Dorsolateral prefrontal cortex (tissue), 120 donors: ENCODE measurements at regions of chr7 and their contacts with region 1.

Region 1: DNA sequence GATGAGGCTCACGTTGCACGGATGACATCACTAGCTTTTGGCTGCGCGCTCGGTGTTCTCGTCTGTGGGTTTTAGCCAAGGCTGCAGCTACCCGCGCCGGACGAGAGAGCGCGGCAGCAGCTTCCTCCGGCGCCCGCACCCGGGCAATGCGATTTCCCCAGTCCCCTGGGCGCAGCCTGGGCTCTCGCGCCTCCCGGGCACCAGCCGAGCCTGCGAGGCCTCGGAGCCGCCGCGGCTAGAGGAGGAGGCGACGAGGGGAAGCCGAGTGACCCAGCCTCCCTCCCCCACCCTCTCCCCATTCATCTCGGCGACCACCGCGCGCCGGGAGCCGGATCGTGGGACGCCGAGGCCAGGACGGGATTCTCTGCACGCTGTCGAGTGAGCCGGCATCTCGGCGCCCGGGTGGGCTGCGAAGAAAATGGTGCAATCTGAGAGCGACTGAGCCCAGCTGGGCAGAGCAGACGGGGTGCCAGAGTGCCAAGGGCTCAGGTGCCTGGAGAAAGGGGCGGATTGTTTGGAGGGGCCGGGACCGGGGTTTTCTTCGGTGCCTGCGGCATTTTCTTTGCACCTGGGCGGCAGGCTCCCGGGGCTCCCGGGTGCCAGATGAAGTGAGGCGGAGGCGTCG is 1.2 kb upstream of the TMEM178B start:
- DNase-seq: peak; percentile 58 to 93 (median 84)
- H3K4me3 ChIP-seq: peak overlapping the region; percentile 57 to 89 (median 77)
- H3K27ac ChIP-seq: peak overlapping the region in 58 of 59 donors; percentile 39 to 94 (median 86)
- H3K27me3 ChIP-seq: peaks cover 0 to 4% (median 0%) of the 10 kb centered on the region in 45 donors
- CTCF ChIP-seq: peak in 15 of 56 donors; percentile 9 to 33 (median 21)

Region 2: GRCh38 chr7:140810830-140811556 is 261.7 kb before region 1 on chr7:
- intact Hi-C with region 1: loop called in 1 of 2 experiments (anchors 5 kb)
- DNase-seq: peak in 4 of 10 donors; percentile 47 to 69 (median 58)
- H3K4me3 ChIP-seq: no peak overlapping the region
- H3K27ac ChIP-seq: no peak overlapping the region
- H3K27me3 ChIP-seq: no peaks in the 10 kb centered on the region
- CTCF ChIP-seq: peak; percentile 54 to 87 (median 80)

Region 3: GRCh38 chr7:140841166-140841715 is 231.4 kb before region 1 on chr7:
- intact Hi-C with region 1: no loop called
- DNase-seq: no peak
- H3K4me3 ChIP-seq: no peak overlapping the region
- H3K27ac ChIP-seq: no peak overlapping the region
- H3K27me3 ChIP-seq: no peaks in the 10 kb centered on the region
- CTCF ChIP-seq: no peak

Region 4: DNA sequence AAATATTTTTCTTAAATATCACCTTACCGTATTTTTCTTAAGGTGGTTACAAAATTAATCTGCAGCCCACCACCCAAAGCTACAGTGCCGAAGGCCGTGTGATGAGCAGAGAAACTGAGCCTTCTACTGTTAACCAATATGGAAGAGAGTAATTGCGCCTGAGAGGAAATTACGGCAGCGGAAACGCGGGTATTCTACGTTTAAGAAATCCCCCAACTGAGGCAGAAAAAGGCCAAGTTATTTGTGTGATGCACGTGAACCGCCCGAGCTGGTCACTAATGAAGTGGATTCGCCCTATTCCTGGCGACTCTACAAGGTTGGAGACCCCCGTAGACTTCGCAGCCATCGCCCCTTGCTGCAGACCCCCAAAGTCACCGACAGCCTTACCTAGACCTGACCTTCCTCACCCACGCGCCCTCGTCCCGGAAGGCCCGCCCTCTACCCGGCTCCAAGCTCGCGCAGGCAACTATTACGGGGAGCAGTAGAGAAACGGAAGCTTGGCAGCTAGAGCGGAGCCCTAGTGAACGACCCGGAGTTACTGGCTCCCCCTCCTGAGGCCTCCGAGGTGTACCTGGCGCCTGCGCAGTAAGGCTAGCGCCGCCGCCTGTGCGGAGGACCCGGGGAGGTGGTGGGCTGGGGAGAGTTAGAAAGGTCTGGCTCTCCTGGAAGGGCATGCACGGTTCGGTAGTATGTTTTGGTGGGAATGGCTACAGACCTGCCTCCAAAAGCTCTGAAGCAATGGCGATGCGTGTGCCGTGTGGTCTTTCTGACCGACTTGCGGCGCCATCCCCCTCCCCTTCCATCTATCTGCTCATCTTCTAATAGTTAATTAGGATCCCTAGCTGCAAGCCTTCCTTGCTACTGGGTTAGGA is 57.9 kb before region 1 on chr7 and contains the start of gene MRPS33:
- intact Hi-C with region 1: loop called in 1 of 2 experiments (anchors 5 kb)
- DNase-seq: peak; percentile 88 to 98 (median 97)
- H3K4me3 ChIP-seq: peak within 1 kb of the TSS; percentile 55 to 95 (median 78)
- H3K27ac ChIP-seq: peak within 1 kb of the TSS; percentile 57 to 97 (median 91)
- H3K27me3 ChIP-seq: no peaks in the 10 kb centered on the region
- CTCF ChIP-seq: peak; percentile 62 to 90 (median 80)
- total RNA-seq, gene MRPS33: 18.7 to 61.6 (median 43.0) TPM

Region 5: DNA sequence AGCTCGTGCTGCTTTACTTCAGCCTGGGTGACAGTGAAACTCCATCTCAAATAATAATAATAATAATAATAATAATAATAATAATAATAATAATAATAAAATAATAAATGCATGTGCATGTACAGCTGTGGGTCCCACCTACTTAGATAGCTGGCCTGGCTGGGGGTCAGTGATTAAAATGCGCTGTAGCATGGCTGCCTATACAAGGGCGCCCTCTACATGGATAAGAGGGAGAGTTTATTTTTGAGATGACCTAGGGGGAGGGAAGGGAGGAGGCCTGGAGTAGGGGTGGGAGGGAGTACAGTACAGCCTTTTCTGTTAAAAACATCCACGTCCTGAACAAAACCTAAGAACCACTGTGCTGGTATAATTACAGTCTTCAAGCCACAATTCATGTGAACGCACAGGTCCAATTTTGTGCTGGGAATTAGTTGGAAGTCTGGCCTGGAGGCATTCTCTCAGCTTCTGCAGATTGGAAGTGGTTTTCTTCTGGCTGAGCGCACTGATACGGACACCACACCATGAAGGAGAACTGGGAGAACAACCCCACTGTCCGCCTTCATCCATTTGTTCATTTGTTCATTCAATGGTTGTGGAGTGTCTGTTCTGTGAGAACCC is 147.7 kb after region 1 on chr7:
- intact Hi-C with region 1: loop called (anchors 5 to 10 kb)
- DNase-seq: no peak
- H3K4me3 ChIP-seq: no peak overlapping the region
- H3K27ac ChIP-seq: no peak overlapping the region
- H3K27me3 ChIP-seq: no peaks in the 10 kb centered on the region
- CTCF ChIP-seq: peak in 28 of 56 donors; percentile 12 to 38 (median 23)

Region 6: DNA sequence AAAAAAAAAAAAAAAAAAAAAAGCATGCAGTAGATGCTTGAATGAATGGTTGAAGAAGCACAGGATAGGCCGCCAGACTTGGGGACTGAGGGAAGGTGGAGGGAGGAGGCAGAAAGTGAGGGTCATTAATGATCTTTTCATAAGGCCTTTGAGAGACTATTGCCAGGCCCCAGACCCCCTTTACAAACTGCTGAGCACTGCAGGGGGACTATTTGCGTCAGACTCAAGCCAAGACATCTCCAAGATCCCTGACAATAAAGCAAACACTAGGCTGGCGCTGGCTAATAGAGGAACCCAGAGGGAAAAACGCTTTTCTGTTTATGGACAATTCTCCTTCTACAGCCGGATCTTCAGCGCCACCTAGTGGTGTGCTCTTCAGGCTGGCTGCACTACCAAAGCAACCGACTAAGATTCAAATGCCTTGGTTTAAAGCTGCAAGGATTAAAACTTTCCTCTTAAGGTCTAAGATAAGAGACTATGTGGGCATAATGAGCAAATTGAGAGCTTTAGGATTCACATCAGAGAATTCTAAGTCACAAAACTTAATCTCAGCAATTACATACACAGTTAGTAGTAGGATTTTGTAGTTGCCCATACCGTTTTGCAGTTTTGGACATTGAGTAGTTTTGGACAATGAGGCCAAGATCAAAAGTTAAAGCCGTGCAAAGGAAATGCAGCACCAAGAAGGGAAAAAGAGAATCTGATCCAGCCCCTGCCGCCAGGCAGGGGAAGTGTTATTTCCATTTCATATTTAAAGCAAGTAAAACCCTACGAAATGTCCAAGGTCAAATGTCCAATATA is 460.7 kb after region 1 on chr7:
- intact Hi-C with region 1: loop called (anchors 1 to 2 kb)
- DNase-seq: peak; percentile 49 to 80 (median 66)
- H3K4me3 ChIP-seq: peak overlapping the region in 15 of 59 donors; percentile 1 to 48 (median 21)
- H3K27ac ChIP-seq: peak overlapping the region in 26 of 59 donors; percentile 16 to 76 (median 50)
- H3K27me3 ChIP-seq: no peaks in the 10 kb centered on the region
- CTCF ChIP-seq: peak; percentile 85 to 99 (median 97)

Region 7: GRCh38 chr7:141654551-141654950 is 581.9 kb after region 1 on chr7:
- intact Hi-C with region 1: loop called (anchors 5 to 10 kb)
- DNase-seq: peak; percentile 34 to 85 (median 69)
- H3K4me3 ChIP-seq: peak overlapping the region in 1 of 59 donors; percentile 1
- H3K27ac ChIP-seq: peak overlapping the region in 44 of 59 donors; percentile 3 to 75 (median 44)
- H3K27me3 ChIP-seq: no peaks in the 10 kb centered on the region
- CTCF ChIP-seq: peak; percentile 47 to 92 (median 84)